Activated CD4-positive, alpha-beta T cell treated with anti-CD3 and anti-CD28 coated beads for 36 hours (primary cell): ENCODE measurements at regions of chr1 and their contacts with region 1.

Region 1: DNA sequence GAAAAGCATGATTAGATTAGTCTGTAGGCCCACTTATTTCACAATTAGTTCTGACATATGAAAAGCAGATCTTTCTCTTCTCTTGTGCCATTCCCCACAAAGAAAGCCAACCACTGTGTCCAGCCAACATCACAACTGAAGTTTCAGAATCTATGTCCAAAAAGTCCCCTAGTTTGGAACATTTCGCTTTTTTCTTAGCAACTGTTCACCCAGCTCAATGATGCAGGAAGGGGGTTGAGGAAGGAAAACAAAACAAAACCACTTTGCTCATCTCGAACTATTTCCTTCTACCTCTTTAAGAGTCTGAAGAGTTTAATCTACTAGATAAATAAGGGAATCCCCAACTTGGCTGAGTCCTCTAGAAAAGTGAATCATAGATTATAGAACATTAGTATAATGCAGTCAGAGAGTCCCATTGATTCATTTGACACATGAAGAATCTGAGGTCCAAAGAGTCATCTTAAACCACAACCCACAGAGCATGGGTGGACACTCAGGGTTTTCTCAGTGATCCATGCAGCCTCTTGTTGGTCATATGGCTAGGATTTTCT is 159.3 kb upstream of the SGIP1 start:
- DNase-seq: peak; percentile 61
- ATAC-seq: peak; percentile 70
- H3K4me3 Mint-ChIP-seq: peak overlapping the region; percentile 69
- H3K27ac Mint-ChIP-seq: peak overlapping the region; percentile 97
- H3K4me1 Mint-ChIP-seq: peaks cover 75% of the 10 kb centered on the region
- H3K27me3 Mint-ChIP-seq: no peaks in the 10 kb centered on the region

Region 2: GRCh38 chr1:65393347-65393746 is 981.3 kb before region 1 on chr1:
- CTCF ChIA-PET with region 1: no interaction called
- POLR2A ChIA-PET with region 1: no interaction called
- intact Hi-C with region 1: loop called in 1 of 2 experiments (anchors 2 kb)
- DNase-seq: peak; percentile 45
- ATAC-seq: peak; percentile 87
- H3K4me3 Mint-ChIP-seq: no peak overlapping the region
- H3K27ac Mint-ChIP-seq: peak overlapping the region; percentile 28
- H3K4me1 Mint-ChIP-seq: peaks cover 57% of the 10 kb centered on the region
- H3K27me3 Mint-ChIP-seq: no peaks in the 10 kb centered on the region

Region 3: GRCh38 chr1:65630855-65631254 is 743.8 kb before region 1 on chr1:
- CTCF ChIA-PET with region 1: no interaction called
- POLR2A ChIA-PET with region 1: no interaction called
- intact Hi-C with region 1: no loop called
- DNase-seq: no peak
- ATAC-seq: no peak
- H3K4me3 Mint-ChIP-seq: no peak overlapping the region
- H3K27ac Mint-ChIP-seq: no peak overlapping the region
- H3K4me1 Mint-ChIP-seq: no peaks in the 10 kb centered on the region
- H3K27me3 Mint-ChIP-seq: no peaks in the 10 kb centered on the region

Region 4: DNA sequence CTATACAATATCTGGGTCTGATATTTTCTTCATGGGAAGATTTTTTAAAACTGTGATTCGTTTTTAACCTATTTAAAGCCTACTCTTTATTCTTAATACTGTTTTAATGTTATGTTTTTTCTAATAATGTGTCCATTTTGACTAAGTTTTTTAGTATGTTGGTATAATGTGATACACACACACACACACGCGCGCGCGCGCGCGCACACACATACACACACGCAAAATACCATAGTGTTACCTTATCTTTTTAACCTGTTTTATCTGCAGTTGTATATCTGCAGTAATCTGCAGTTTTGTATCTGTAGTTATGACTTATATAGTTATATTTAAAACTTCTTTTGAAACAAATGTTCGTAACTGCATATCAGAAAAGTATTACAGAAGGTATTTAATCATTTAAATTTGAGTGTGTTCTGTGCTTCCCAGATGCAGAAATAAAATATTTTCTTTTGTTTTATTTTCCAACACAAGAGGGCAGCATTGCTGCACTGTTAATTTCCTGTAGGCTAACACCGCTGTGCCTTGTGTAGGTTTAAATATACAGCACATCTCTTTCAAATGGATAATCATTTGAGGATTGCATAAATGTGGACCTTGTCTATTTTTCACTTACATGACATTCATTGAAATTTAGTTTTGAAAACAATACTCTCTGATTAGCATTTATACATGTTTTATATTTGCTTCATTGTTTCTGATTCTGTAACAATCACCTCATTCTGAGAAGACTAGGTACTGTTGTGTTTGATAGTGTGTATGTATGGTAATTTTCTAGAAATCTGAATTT is 415.9 kb before region 1 on chr1:
- CTCF ChIA-PET with region 1: no interaction called
- POLR2A ChIA-PET with region 1: no interaction called
- intact Hi-C with region 1: loop called in 1 of 2 experiments (anchors 10 kb)
- DNase-seq: peak; percentile 23
- ATAC-seq: peak; percentile 70
- H3K4me3 Mint-ChIP-seq: no peak overlapping the region
- H3K27ac Mint-ChIP-seq: no peak overlapping the region
- H3K4me1 Mint-ChIP-seq: no peaks in the 10 kb centered on the region
- H3K27me3 Mint-ChIP-seq: no peaks in the 10 kb centered on the region

Region 5: DNA sequence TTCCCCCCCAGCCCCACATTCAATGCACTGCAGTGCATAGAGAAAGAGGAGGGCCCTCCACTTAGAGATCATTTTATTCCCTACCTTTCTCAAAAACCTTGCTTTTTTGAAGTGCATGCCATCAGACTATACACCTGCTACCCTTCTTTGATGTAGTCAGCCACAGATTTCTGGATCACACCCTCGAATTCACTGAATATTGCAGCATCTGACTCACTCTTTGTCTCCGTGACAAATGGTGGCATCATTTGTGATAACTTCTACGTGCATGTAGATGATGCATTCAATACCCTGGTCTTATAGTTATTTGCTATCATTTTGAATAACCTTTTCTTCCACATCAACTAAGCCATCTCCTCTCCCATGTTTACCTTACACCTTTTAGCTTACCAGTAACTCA is 151.0 kb before region 1 on chr1:
- CTCF ChIA-PET with region 1: no interaction called
- POLR2A ChIA-PET with region 1: no interaction called
- intact Hi-C with region 1: no loop called
- DNase-seq: peak; percentile 34
- ATAC-seq: peak; percentile 92
- H3K4me3 Mint-ChIP-seq: no peak overlapping the region
- H3K27ac Mint-ChIP-seq: no peak overlapping the region
- H3K4me1 Mint-ChIP-seq: peaks cover 7% of the 10 kb centered on the region
- H3K27me3 Mint-ChIP-seq: peaks cover 4% of the 10 kb centered on the region

Region 6: DNA sequence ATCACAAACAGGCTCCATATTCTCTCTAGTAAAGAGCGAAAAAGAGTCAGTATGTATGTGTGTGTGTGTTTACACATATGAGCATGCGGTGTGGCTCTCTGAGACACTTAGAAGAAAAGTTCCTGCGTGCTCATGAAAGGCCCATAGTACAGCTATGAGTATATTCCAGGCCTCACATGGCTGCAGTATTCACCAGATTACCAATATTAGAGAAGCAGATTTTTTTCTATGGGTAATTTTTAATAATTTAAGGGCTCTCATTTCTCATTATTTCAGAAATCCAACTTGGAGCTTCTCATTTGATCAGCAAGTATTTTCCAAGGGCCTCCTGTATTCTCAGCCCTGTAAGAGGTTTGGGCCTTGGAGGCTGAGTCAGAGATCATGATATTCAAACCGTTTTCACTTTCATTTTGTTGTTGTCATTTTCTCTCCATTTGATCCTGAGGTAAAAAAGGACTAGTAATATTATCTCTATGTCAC is 73.6 kb before region 1 on chr1:
- CTCF ChIA-PET with region 1: interaction called, 4 read pairs
- POLR2A ChIA-PET with region 1: interaction called, 4 read pairs
- intact Hi-C with region 1: loop called in 1 of 2 experiments (anchors 1 kb)
- DNase-seq: peak; percentile 43
- ATAC-seq: peak; percentile 96
- H3K4me3 Mint-ChIP-seq: peak overlapping the region; percentile 26
- H3K27ac Mint-ChIP-seq: peak overlapping the region; percentile 60
- H3K4me1 Mint-ChIP-seq: peaks cover 48% of the 10 kb centered on the region
- H3K27me3 Mint-ChIP-seq: no peaks in the 10 kb centered on the region

Region 7: GRCh38 chr1:66360285-66360724 is 14.3 kb before region 1 on chr1:
- CTCF ChIA-PET with region 1: interaction called, 18 read pairs
- POLR2A ChIA-PET with region 1: no interaction called
- intact Hi-C with region 1: no loop called
- DNase-seq: no peak
- ATAC-seq: peak; percentile 51
- H3K4me3 Mint-ChIP-seq: no peak overlapping the region
- H3K27ac Mint-ChIP-seq: no peak overlapping the region
- H3K4me1 Mint-ChIP-seq: peaks cover 76% of the 10 kb centered on the region
- H3K27me3 Mint-ChIP-seq: no peaks in the 10 kb centered on the region

Region 8: GRCh38 chr1:66446261-66447001 is 71.8 kb after region 1 on chr1:
- CTCF ChIA-PET with region 1: interaction called, 13 read pairs
- POLR2A ChIA-PET with region 1: interaction called, 4 read pairs
- intact Hi-C with region 1: loop called in 1 of 2 experiments (anchors 2 kb)
- DNase-seq: peak; percentile 45
- ATAC-seq: peak; percentile 60
- H3K4me3 Mint-ChIP-seq: peak overlapping the region; percentile 64
- H3K27ac Mint-ChIP-seq: peak overlapping the region; percentile 97
- H3K4me1 Mint-ChIP-seq: peaks cover 33% of the 10 kb centered on the region
- H3K27me3 Mint-ChIP-seq: peaks cover 7% of the 10 kb centered on the region

Region 9: GRCh38 chr1:67339623-67340343 is 965.1 kb after region 1 on chr1:
- CTCF ChIA-PET with region 1: no interaction called
- POLR2A ChIA-PET with region 1: no interaction called
- intact Hi-C with region 1: loop called in 1 of 2 experiments (anchors 5 kb)
- DNase-seq: peak; percentile 67
- ATAC-seq: peak; percentile 67
- H3K4me3 Mint-ChIP-seq: peak overlapping the region; percentile 40
- H3K27ac Mint-ChIP-seq: peak overlapping the region; percentile 94
- H3K4me1 Mint-ChIP-seq: peaks cover 87% of the 10 kb centered on the region
- H3K27me3 Mint-ChIP-seq: no peaks in the 10 kb centered on the region